Activated CD8-positive, alpha-beta T cell treated with anti-CD3 and anti-CD28 coated beads for 36 hours (primary cell): ENCODE measurements at regions of chr19 and their contacts with region 1.

Region 1: GRCh38 chr19:18419195-18419698 is at the start of gene SSBP4:
- DNase-seq: peak; percentile 72
- ATAC-seq: peak; percentile 38
- H3K4me3 Mint-ChIP-seq: peak within 1 kb of the TSS; percentile 86
- H3K27ac Mint-ChIP-seq: peak within 1 kb of the TSS; percentile 79
- H3K4me1 Mint-ChIP-seq: peaks cover 78% of the 10 kb centered on the region
- H3K27me3 Mint-ChIP-seq: peaks cover 11% of the 10 kb centered on the region
- CTCF ChIP-seq: no peak
- total RNA-seq, gene SSBP4: 98.2 to 102 TPM

Region 2: GRCh38 chr19:18312092-18312534 is 107.1 kb before region 1 on chr19:
- CTCF ChIA-PET with region 1: no interaction called
- POLR2A ChIA-PET with region 1: no interaction called
- intact Hi-C with region 1: no loop called
- DNase-seq: no peak
- ATAC-seq: no peak
- H3K4me3 Mint-ChIP-seq: no peak overlapping the region
- H3K27ac Mint-ChIP-seq: no peak overlapping the region
- H3K4me1 Mint-ChIP-seq: peaks cover 30% of the 10 kb centered on the region
- H3K27me3 Mint-ChIP-seq: no peaks in the 10 kb centered on the region
- CTCF ChIP-seq: no peak

Region 3: GRCh38 chr19:18349524-18350128 is 69.6 kb before region 1 on chr19:
- CTCF ChIA-PET with region 1: interaction called, 5 read pairs
- POLR2A ChIA-PET with region 1: no interaction called
- intact Hi-C with region 1: loop called (anchors 5 kb)
- DNase-seq: peak; percentile 64
- ATAC-seq: peak; percentile 58
- H3K4me3 Mint-ChIP-seq: no peak overlapping the region
- H3K27ac Mint-ChIP-seq: no peak overlapping the region
- H3K4me1 Mint-ChIP-seq: peaks cover 3% of the 10 kb centered on the region
- H3K27me3 Mint-ChIP-seq: no peaks in the 10 kb centered on the region
- CTCF ChIP-seq: peak; percentile 58

Region 4: DNA sequence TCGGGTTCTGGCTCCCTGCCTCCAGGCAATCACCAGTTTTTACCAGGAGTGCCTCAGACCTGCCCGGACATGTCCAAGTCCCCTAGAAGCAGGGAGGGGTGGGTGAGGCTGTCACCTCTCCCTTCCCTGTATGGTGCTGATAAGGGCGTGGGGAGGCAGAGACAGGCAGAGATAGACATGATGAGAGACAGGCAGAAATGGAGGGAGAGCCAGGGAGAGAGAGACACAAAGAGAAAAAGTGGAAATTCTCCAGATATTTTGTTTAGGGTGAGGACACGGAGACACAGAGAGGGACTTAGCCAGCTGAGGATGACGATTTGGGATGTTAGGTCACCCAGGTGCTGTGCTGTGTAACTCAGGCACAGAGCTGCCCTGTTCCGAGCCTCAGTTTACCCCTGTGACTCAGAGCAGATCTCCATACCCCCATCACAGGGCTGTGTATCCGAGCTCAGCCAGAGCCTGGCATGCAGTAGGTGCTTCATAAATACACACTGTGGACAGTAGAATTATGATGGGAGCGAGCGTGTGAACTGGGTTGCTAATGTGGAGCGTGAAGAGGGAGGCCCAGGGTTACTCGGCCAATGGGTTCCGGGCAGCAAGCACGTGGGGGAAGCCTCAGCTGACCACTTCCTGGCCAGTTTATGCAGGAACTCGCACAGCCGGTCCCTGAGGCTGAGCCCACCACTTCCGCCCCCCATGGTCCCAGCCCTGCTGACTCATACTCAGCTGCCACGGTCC is 45.2 kb before region 1 on chr19:
- CTCF ChIA-PET with region 1: no interaction called
- POLR2A ChIA-PET with region 1: no interaction called
- intact Hi-C with region 1: no loop called
- DNase-seq: peak; percentile 91
- ATAC-seq: peak; percentile 93
- H3K4me3 Mint-ChIP-seq: peak overlapping the region; percentile 18
- H3K27ac Mint-ChIP-seq: peak overlapping the region; percentile 77
- H3K4me1 Mint-ChIP-seq: peaks cover 10% of the 10 kb centered on the region
- H3K27me3 Mint-ChIP-seq: no peaks in the 10 kb centered on the region
- CTCF ChIP-seq: no peak

Region 5: DNA sequence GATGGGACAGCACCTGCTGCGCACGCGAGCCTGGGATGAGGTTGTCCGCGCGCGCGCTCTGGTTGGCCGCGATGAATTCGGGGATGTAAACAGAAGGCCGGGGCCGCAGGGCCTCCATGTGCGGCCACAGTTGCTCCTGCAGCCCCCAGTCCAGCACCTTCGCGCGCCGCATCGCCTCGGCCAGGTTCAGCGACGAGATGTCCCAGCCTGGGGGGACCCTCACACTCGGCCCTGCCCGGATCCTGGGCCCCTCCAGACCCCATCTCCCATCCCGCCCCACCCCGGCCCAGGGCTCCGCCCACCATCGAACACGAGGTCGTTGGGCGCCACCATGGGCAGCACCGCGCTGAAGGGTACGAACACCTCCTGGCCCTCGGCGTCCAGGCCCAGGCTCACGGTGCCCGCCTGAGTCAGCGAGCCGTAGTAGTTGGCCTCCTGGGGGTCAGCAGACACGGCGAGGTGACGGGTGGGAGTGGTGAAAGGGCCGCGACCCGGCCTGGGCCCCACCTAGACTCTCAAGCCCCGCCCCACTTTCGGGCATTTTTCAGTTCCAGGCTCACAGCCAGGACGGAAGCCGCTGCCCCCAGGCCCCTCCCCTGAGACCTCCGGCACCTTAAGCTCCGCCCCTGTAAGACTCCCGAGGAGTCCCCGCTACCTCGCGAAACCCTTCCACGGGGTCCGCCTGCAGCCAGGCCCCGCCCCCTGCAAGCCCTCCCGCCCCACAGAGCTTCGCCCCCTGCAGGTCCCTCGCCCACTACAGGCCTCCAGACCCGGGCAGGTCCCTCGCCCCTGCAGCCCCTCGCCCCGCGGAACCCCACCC is 17.6 kb after region 1 on chr19:
- CTCF ChIA-PET with region 1: interaction called, 3 read pairs
- POLR2A ChIA-PET with region 1: interaction called, 81 read pairs
- intact Hi-C with region 1: no loop called
- DNase-seq: peak; percentile 93
- ATAC-seq: peak; percentile 84
- H3K4me3 Mint-ChIP-seq: peak overlapping the region; percentile 72
- H3K27ac Mint-ChIP-seq: peak overlapping the region; percentile 25
- H3K4me1 Mint-ChIP-seq: peaks cover 23% of the 10 kb centered on the region
- H3K27me3 Mint-ChIP-seq: no peaks in the 10 kb centered on the region
- CTCF ChIP-seq: no peak